ENCODE measurements at regions of chr1 and their contacts with region 1.

Region 1: GRCh38 chr1:154335025-154335714 is 9.8 kb downstream of the ATP8B2 start:
- DNase-seq: no peak
- ATAC-seq: peak; percentile 99
- H3K4me3 ChIP-seq: no peak overlapping the region
- H3K27ac ChIP-seq: no peak overlapping the region
- H3K4me1 ChIP-seq: no peaks in the 10 kb centered on the region
- H3K27me3 ChIP-seq: no peaks in the 10 kb centered on the region
- CTCF ChIP-seq: peak; percentile 75 to 88 (median 84)
- EP300 ChIP-seq: no peak
- POLR2A ChIP-seq: no peak
- RAD21 ChIP-seq: peak; percentile 77

Region 2: GRCh38 chr1:154193821-154194220 is 141.3 kb before region 1 on chr1:
- CTCF ChIA-PET with region 1: interaction called, 44 read pairs
- POLR2A ChIA-PET with region 1: interaction called, 7 read pairs
- RAD21 ChIA-PET with region 1: interaction called, 30 read pairs
- SMC1A ChIA-PET with region 1: interaction called, 25 read pairs
- in situ Hi-C with region 1: loop called (anchors 10 kb)
- intact Hi-C with region 1: loop called (anchors 1 kb)
- DNase-seq: no peak
- ATAC-seq: no peak
- H3K4me3 ChIP-seq: no peak overlapping the region
- H3K27ac ChIP-seq: no peak overlapping the region
- H3K4me1 ChIP-seq: no peaks in the 10 kb centered on the region
- H3K27me3 ChIP-seq: peaks cover 0 to 3% of the 10 kb centered on the region in 2 experiments; a peak in 3 of 4 replicates
- CTCF ChIP-seq: no peak
- EP300 ChIP-seq: no peak
- POLR2A ChIP-seq: no peak
- RAD21 ChIP-seq: no peak

Region 3: GRCh38 chr1:154304664-154305337 is 30.4 kb before region 1 on chr1:
- CTCF ChIA-PET with region 1: interaction called, 10 read pairs
- POLR2A ChIA-PET with region 1: no interaction called
- RAD21 ChIA-PET with region 1: no interaction called
- SMC1A ChIA-PET with region 1: interaction called, 3 read pairs
- in situ Hi-C with region 1: no loop called
- intact Hi-C with region 1: no loop called
- DNase-seq: no peak
- ATAC-seq: peak; percentile 87
- H3K4me3 ChIP-seq: no peak overlapping the region
- H3K27ac ChIP-seq: no peak overlapping the region
- H3K4me1 ChIP-seq: no peaks in the 10 kb centered on the region
- H3K27me3 ChIP-seq: no peaks in the 10 kb centered on the region
- CTCF ChIP-seq: no peak
- EP300 ChIP-seq: no peak
- POLR2A ChIP-seq: no peak
- RAD21 ChIP-seq: no peak

Region 4: DNA sequence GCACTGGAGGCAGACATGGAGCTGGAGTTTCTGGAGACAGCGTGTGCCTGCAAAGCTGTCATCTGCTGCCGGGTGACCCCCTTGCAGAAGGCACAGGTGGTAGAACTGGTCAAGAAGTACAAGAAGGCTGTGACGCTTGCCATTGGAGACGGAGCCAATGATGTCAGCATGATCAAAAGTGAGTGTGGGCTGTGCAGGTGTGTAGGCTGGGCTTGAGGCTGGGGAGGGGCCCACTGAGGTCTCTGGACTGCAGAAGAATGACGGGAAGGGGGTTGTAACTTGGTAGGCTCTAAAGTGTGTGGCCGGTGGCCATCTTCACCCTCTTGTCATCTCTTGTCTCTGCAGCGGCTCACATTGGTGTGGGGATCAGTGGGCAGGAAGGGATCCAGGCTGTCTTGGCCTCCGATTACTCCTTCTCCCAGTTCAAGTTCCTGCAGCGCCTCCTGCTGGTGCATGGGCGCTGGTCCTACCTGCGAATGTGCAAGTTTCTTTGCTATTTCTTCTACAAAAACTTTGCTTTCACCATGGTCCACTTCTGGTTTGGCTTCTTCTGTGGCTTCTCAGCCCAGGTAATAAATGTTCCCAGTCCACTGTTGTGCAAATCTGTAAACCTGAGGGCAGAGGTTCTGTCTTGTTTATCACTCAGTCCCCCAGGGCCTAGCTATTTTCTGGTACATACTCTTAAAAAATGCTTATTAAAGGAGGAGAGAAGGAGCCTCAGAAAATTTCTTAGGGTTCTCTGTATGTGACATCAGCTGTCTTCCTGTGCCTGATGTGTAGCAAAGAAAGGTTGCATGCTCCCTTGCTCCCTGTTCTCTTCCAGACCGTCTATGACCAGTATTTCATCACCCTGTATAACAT is 10.0 kb after region 1 on chr1:
- CTCF ChIA-PET with region 1: interaction called, 37 read pairs
- POLR2A ChIA-PET with region 1: no interaction called
- RAD21 ChIA-PET with region 1: interaction called, 4 read pairs
- SMC1A ChIA-PET with region 1: interaction called, 5 read pairs
- in situ Hi-C with region 1: no loop called
- intact Hi-C with region 1: no loop called
- DNase-seq: no peak
- ATAC-seq: peak; percentile 77
- H3K4me3 ChIP-seq: no peak overlapping the region
- H3K27ac ChIP-seq: no peak overlapping the region
- H3K4me1 ChIP-seq: no peaks in the 10 kb centered on the region
- H3K27me3 ChIP-seq: no peaks in the 10 kb centered on the region
- CTCF ChIP-seq: peak; percentile 54 to 80 (median 70)
- EP300 ChIP-seq: no peak
- POLR2A ChIP-seq: no peak
- RAD21 ChIP-seq: peak; percentile 49

Region 5: GRCh38 chr1:154404984-154405761 is 70.0 kb after region 1 on chr1 and contains the start of gene IL6R:
- CTCF ChIA-PET with region 1: interaction called, 11 read pairs
- POLR2A ChIA-PET with region 1: no interaction called
- RAD21 ChIA-PET with region 1: interaction called, 6 read pairs
- SMC1A ChIA-PET with region 1: interaction called, 3 read pairs
- in situ Hi-C with region 1: no loop called
- intact Hi-C with region 1: no loop called
- DNase-seq: no peak
- ATAC-seq: peak; percentile 52
- H3K4me3 ChIP-seq: peak within 1 kb of the TSS; percentile 75
- H3K27ac ChIP-seq: peak within 1 kb of the TSS; percentile 83
- H3K4me1 ChIP-seq: peaks cover 68% of the 10 kb centered on the region
- H3K27me3 ChIP-seq: no peaks in the 10 kb centered on the region
- CTCF ChIP-seq: peak; percentile 46 to 63 (median 54); a peak in 5 of 6 replicates
- EP300 ChIP-seq: no peak
- POLR2A ChIP-seq: no peak; the same call in 1 of the 2 replicates
- RAD21 ChIP-seq: peak; percentile 55; the same call in 1 of the 2 replicates
- polyA plus RNA-seq, gene IL6R: 1.9 to 3.9 TPM

Region 6: GRCh38 chr1:154546264-154547063 is 211.3 kb after region 1 on chr1:
- CTCF ChIA-PET with region 1: interaction called, 12 read pairs
- POLR2A ChIA-PET with region 1: no interaction called
- RAD21 ChIA-PET with region 1: interaction called, 4 read pairs
- SMC1A ChIA-PET with region 1: interaction called, 8 read pairs
- in situ Hi-C with region 1: no loop called
- intact Hi-C with region 1: loop called (anchors 5 kb)
- DNase-seq: peak; percentile 13
- ATAC-seq: peak; percentile 87
- H3K4me3 ChIP-seq: no peak overlapping the region
- H3K27ac ChIP-seq: no peak overlapping the region
- H3K4me1 ChIP-seq: peaks cover 15% of the 10 kb centered on the region
- H3K27me3 ChIP-seq: no peaks in the 10 kb centered on the region; a peak in 1 of 4 replicates
- CTCF ChIP-seq: peak; percentile 72 to 86 (median 84)
- EP300 ChIP-seq: no peak
- POLR2A ChIP-seq: no peak
- RAD21 ChIP-seq: peak; percentile 98